ENCODE measurements at regions of chr6 and their contacts with region 1.

Region 1: DNA sequence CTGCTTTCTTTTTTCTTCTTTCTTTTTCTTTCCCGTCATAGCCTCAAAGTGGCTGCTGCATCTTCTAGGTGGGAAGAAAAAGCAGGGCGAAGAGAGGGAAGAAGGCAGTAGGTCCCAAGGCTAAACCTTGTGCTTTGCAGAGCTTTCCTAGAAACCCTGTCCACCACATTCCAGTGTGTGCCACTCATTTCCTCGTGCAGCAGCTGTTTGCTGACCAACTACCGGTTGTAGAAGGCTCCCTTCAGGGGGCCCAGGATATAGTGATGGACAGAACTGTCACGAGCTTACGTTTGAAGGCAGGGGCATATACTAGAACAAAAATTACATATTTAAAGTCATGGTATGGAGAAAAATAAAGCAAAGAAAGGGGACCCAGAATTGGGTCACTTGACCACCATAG is 103.0 kb downstream of the SASH1 start:
- DNase-seq: no peak
- ATAC-seq: no peak
- H3K4me3 Mint-ChIP-seq: no peak overlapping the region
- H3K27ac Mint-ChIP-seq: no peak overlapping the region
- H3K4me1 Mint-ChIP-seq: peaks cover 19% of the 10 kb centered on the region
- H3K27me3 Mint-ChIP-seq: peaks cover 39% of the 10 kb centered on the region
- CTCF ChIP-seq: no peak

Region 2: GRCh38 chr6:148203970-148204369 is 241.7 kb before region 1 on chr6:
- CTCF ChIA-PET with region 1: no interaction called
- POLR2A ChIA-PET with region 1: no interaction called
- intact Hi-C with region 1: loop called (anchors 5 kb)
- DNase-seq: peak; percentile 85
- ATAC-seq: peak; percentile 88
- H3K4me3 Mint-ChIP-seq: peak overlapping the region; percentile 60
- H3K27ac Mint-ChIP-seq: peak overlapping the region; percentile 84
- H3K4me1 Mint-ChIP-seq: peaks cover 26% of the 10 kb centered on the region
- H3K27me3 Mint-ChIP-seq: peaks cover 60% of the 10 kb centered on the region
- CTCF ChIP-seq: no peak

Region 3: GRCh38 chr6:148414836-148415235 is 30.8 kb before region 1 on chr6:
- CTCF ChIA-PET with region 1: no interaction called
- POLR2A ChIA-PET with region 1: no interaction called
- intact Hi-C with region 1: no loop called
- DNase-seq: no peak
- ATAC-seq: no peak
- H3K4me3 Mint-ChIP-seq: no peak overlapping the region
- H3K27ac Mint-ChIP-seq: no peak overlapping the region
- H3K4me1 Mint-ChIP-seq: no peaks in the 10 kb centered on the region
- H3K27me3 Mint-ChIP-seq: peaks cover 6% of the 10 kb centered on the region
- CTCF ChIP-seq: no peak

Measured in activated CD8-positive, alpha-beta T cell treated with anti-CD3 and anti-CD28 coated beads for 36 hours (primary cell).